ENCODE measurements at regions of chr4 and their contacts with region 1.

Region 1: DNA sequence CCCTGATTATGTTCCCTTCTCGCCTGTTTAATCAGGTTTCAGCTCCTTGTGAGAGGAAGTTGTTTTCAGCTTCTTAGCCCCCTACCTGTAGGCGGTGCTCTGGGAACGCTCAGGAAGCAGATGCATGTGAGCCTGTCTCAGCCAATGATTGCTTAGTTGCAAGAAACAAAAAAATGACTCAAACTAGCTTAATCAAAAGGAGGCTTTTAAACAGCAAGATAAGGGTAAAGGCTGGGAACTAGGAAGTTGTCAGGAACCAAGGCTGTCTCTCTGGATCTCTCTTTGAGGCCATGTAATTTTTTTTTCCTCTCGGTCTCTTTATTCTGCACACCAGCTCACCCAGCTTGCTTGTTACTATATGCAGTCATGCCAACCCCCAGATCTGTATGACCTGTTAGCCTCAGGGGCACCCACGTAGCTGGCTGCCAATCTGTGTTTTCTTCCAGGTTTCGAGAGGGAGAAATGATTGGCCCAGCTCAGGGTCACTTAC is 109.1 kb downstream of the PTTG2 start:
- DNase-seq: no peak
- ATAC-seq: peak in 6 of 8 donors; percentile 23 to 54 (median 36)
- H3K4me3 ChIP-seq: no peak overlapping the region
- H3K27ac ChIP-seq: peak overlapping the region in 7 of 10 donors; percentile 30 to 86 (median 59)
- H3K4me1 ChIP-seq: peaks cover 6 to 80% (median 53%) of the 10 kb centered on the region in 9 donors
- H3K27me3 ChIP-seq: no peaks in the 10 kb centered on the region
- CTCF ChIP-seq: peak in 6 of 9 donors; percentile 18 to 61 (median 37)

Region 2: GRCh38 chr4:38114386-38115150 is 45.3 kb after region 1 on chr4:
- intact Hi-C with region 1: loop called in 1 of 10 experiments (anchors 5 kb)
- DNase-seq: no peak
- ATAC-seq: peak in 7 of 8 donors; percentile 23 to 59 (median 45)
- H3K4me3 ChIP-seq: no peak overlapping the region
- H3K27ac ChIP-seq: peak overlapping the region in 9 of 10 donors; percentile 17 to 68 (median 51)
- H3K4me1 ChIP-seq: peaks cover under 1 to 61% (median 42%) of the 10 kb centered on the region in 9 donors
- H3K27me3 ChIP-seq: no peaks in the 10 kb centered on the region
- CTCF ChIP-seq: no peak

Region 3: DNA sequence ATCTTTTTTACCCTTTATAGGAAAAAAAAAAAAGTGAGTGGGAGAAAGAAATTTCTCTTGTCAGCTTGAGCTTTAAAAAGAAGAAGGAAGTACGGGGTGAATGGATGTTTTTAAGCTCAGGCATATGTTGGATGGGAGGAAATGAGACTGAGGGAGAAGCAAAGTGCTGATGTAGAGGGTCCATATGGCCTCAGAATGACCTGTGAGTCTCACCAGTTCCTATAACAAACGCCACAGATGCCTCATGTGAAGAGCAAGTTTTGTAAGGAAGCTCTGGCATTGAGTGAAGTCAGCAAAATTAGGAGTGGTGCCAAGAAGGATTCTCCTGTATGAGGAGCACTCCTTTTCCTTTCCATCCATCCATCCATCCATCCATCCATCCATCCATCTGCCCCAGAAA is 105.5 kb after region 1 on chr4:
- intact Hi-C with region 1: loop called in 9 of 10 experiments (anchors 5 to 10 kb)
- DNase-seq: peak in 1 of 2 donors; percentile 28
- ATAC-seq: peak in 7 of 8 donors; percentile 32 to 57 (median 55)
- H3K4me3 ChIP-seq: no peak overlapping the region
- H3K27ac ChIP-seq: peak overlapping the region in 2 of 10 donors; percentile 12 to 79
- H3K4me1 ChIP-seq: peaks cover 2 to 68% (median 21%) of the 10 kb centered on the region in 9 donors
- H3K27me3 ChIP-seq: no peaks in the 10 kb centered on the region
- CTCF ChIP-seq: no peak

Region 4: GRCh38 chr4:38210391-38211114 is 141.2 kb after region 1 on chr4:
- intact Hi-C with region 1: no loop called
- DNase-seq: no peak
- ATAC-seq: peak in 4 of 8 donors; percentile 21 to 44 (median 36)
- H3K4me3 ChIP-seq: no peak overlapping the region
- H3K27ac ChIP-seq: peak overlapping the region in 2 of 10 donors; percentile 48 to 66
- H3K4me1 ChIP-seq: peaks cover 0 to 30% (median 17%) of the 10 kb centered on the region in 9 donors
- H3K27me3 ChIP-seq: no peaks in the 10 kb centered on the region
- CTCF ChIP-seq: no peak

Region 5: GRCh38 chr4:38266616-38267015 is 197.3 kb after region 1 on chr4:
- intact Hi-C with region 1: no loop called
- DNase-seq: no peak
- ATAC-seq: peak in 4 of 8 donors; percentile 47 to 81 (median 62)
- H3K4me3 ChIP-seq: no peak overlapping the region
- H3K27ac ChIP-seq: no peak overlapping the region
- H3K4me1 ChIP-seq: no peaks in the 10 kb centered on the region
- H3K27me3 ChIP-seq: no peaks in the 10 kb centered on the region
- CTCF ChIP-seq: no peak

Region 6: GRCh38 chr4:38310446-38311043 is 241.2 kb after region 1 on chr4:
- intact Hi-C with region 1: loop called in 7 of 10 experiments (anchors 5 to 10 kb)
- DNase-seq: no peak
- ATAC-seq: no peak
- H3K4me3 ChIP-seq: no peak overlapping the region
- H3K27ac ChIP-seq: no peak overlapping the region
- H3K4me1 ChIP-seq: peaks cover 0 to 13% (median 0%) of the 10 kb centered on the region in 9 donors
- H3K27me3 ChIP-seq: no peaks in the 10 kb centered on the region
- CTCF ChIP-seq: no peak

Region 7: DNA sequence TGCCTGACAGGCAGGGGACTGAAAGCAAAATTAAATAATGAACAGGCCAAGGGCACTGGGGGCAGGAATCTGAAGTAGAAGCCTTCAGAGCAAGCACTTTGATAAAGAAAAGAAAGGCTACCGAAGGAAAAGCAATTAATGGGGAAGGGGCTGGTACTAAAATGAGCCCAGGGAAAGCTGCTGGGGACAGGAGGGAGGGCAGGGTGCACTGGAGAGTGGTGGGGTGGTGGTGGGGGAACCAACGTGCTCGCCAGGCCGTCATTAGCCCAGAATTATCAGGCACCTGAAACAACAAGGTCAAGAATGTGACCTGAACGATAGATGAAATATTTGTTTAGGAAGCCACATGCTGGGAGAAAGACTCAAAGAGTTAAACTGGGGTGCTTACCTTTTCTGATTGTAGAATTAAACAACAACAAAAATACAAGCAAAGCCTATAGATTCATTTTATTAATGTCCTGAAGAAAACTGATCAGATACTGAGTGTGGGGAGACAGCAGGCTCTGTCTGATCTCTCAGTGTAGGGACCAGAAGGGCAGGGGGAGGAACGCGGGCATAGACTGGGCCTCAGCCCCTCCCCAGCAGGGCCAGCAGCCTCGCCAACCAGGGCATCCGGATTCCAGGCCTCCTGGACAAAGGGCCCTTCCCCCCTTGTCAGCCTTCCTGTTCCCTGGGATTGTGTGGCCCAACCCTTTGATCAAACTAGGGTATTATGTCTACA is 355.0 kb after region 1 on chr4:
- intact Hi-C with region 1: no loop called
- DNase-seq: peak; percentile 10 to 19
- ATAC-seq: peak in 6 of 8 donors; percentile 52 to 86 (median 64)
- H3K4me3 ChIP-seq: no peak overlapping the region
- H3K27ac ChIP-seq: no peak overlapping the region
- H3K4me1 ChIP-seq: peaks cover 0 to 13% (median 0%) of the 10 kb centered on the region in 9 donors
- H3K27me3 ChIP-seq: no peaks in the 10 kb centered on the region
- CTCF ChIP-seq: no peak

Region 8: DNA sequence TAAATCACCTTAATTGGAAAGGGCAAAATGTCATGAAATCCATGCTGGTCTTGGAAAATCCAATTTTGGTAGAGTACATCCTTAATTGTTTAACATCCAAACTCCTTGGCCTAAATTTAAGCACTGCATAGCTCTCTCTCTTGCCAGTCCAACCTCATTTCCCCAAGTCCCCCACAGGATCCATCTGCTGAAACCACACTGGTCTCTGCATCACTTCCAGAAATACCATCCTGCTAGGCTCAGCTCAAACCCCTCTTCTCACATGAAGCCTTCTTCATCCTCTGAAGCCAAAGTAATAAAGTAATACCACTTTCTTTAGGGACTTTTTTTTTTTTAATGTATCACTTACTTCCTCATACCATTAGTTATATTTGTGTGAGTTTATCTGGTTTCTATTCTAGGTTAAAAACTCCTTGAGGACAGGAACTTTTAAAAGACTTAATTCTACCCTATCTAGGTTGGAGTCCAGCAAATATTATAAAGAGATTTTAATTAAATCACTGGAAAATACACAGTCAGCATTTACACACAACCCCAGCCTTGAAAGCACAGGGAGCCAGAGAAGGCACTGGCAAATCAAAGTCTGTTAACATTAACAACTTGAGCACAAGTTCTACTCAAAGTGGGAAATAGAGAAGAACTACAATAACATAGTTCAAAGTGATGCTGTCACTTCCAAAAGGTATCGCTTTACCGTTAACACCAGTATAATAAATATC is 577.9 kb after region 1 on chr4:
- intact Hi-C with region 1: no loop called
- DNase-seq: no peak
- ATAC-seq: no peak
- H3K4me3 ChIP-seq: no peak overlapping the region
- H3K27ac ChIP-seq: no peak overlapping the region
- H3K4me1 ChIP-seq: peaks cover 0 to 4% (median 0%) of the 10 kb centered on the region in 9 donors
- H3K27me3 ChIP-seq: no peaks in the 10 kb centered on the region
- CTCF ChIP-seq: no peak